B cell (primary cell): ENCODE measurements at regions of chr14 and their contacts with region 1.

Region 1: GRCh38 chr14:67695394-67695949 is at the start of gene RDH11:
- DNase-seq: peak; percentile 87
- ATAC-seq: peak; percentile 98
- H3K4me3 ChIP-seq: peak within 1 kb of the TSS; percentile 77 to 97 (median 94)
- H3K4me3 Mint-ChIP-seq: peak within 1 kb of the TSS; percentile 96
- H3K27ac ChIP-seq: peak within 1 kb of the TSS; percentile 62 to 88
- H3K27ac Mint-ChIP-seq: peak within 1 kb of the TSS; percentile 89
- H3K4me1 ChIP-seq: peaks cover 6 to 13% of the 10 kb centered on the region in 2 donors
- H3K4me1 Mint-ChIP-seq: peaks cover 14% of the 10 kb centered on the region
- H3K27me3 ChIP-seq: no peaks in the 10 kb centered on the region
- H3K27me3 Mint-ChIP-seq: no peaks in the 10 kb centered on the region
- CTCF ChIP-seq: no peak
- total RNA-seq, gene RDH11: 32.8 and 35.4 TPM in 2 replicates

Region 2: GRCh38 chr14:66507722-66508546 is 1187.5 kb before region 1 on chr14 and contains the start of gene GPHN:
- CTCF ChIA-PET with region 1: no interaction called
- POLR2A ChIA-PET with region 1: no interaction called
- intact Hi-C with region 1: loop called (anchors 5 kb)
- DNase-seq: peak; percentile 90
- ATAC-seq: peak; percentile 90
- H3K4me3 ChIP-seq: peak within 1 kb of the TSS; percentile 74 to 90 (median 81)
- H3K4me3 Mint-ChIP-seq: peak within 1 kb of the TSS; percentile 99
- H3K27ac ChIP-seq: peak within 1 kb of the TSS; percentile 36 to 66
- H3K27ac Mint-ChIP-seq: peak within 1 kb of the TSS; percentile 91
- H3K4me1 ChIP-seq: peaks cover 7 to 18% of the 10 kb centered on the region in 2 donors
- H3K4me1 Mint-ChIP-seq: peaks cover 25% of the 10 kb centered on the region
- H3K27me3 ChIP-seq: peaks cover 0 to 8% (median 0%) of the 10 kb centered on the region in 4 experiments
- H3K27me3 Mint-ChIP-seq: peaks cover 6% of the 10 kb centered on the region
- CTCF ChIP-seq: peak; percentile 24
- total RNA-seq, gene GPHN: 15.5 and 18.0 TPM in 2 replicates

Region 3: GRCh38 chr14:67487937-67488893 is 207.3 kb before region 1 on chr14 and contains the start of gene TMEM229B:
- CTCF ChIA-PET with region 1: no interaction called
- POLR2A ChIA-PET with region 1: no interaction called
- intact Hi-C with region 1: loop called (anchors 1 kb)
- DNase-seq: peak; percentile 94
- ATAC-seq: peak; percentile 83
- H3K4me3 ChIP-seq: peak within 1 kb of the TSS; percentile 24 to 66 (median 55)
- H3K4me3 Mint-ChIP-seq: peak within 1 kb of the TSS; percentile 84
- H3K27ac ChIP-seq: peak within 1 kb of the TSS; percentile 97 to 98
- H3K27ac Mint-ChIP-seq: peak within 1 kb of the TSS; percentile 96
- H3K4me1 ChIP-seq: peaks cover 70 to 77% of the 10 kb centered on the region in 2 donors
- H3K4me1 Mint-ChIP-seq: peaks cover 83% of the 10 kb centered on the region
- H3K27me3 ChIP-seq: no peaks in the 10 kb centered on the region
- H3K27me3 Mint-ChIP-seq: no peaks in the 10 kb centered on the region
- CTCF ChIP-seq: peak; percentile 25
- total RNA-seq, gene TMEM229B: 4.2 and 6.9 TPM in 2 replicates

Region 4: GRCh38 chr14:67619446-67620216 is 75.8 kb before region 1 on chr14 and contains the start of gene ARG2:
- CTCF ChIA-PET with region 1: interaction called, 5 read pairs
- POLR2A ChIA-PET with region 1: no interaction called
- intact Hi-C with region 1: loop called (anchors 1 kb)
- DNase-seq: peak; percentile 98
- ATAC-seq: peak; percentile 94
- H3K4me3 ChIP-seq: peak within 1 kb of the TSS; percentile 57 to 94 (median 81)
- H3K4me3 Mint-ChIP-seq: peak within 1 kb of the TSS; percentile 92
- H3K27ac ChIP-seq: peak within 1 kb of the TSS; percentile 76 to 78
- H3K27ac Mint-ChIP-seq: peak within 1 kb of the TSS; percentile 94
- H3K4me1 ChIP-seq: peaks cover 12 to 18% of the 10 kb centered on the region in 2 donors
- H3K4me1 Mint-ChIP-seq: peaks cover 23% of the 10 kb centered on the region
- H3K27me3 ChIP-seq: peaks cover 0 to 4% (median 0%) of the 10 kb centered on the region in 4 experiments
- H3K27me3 Mint-ChIP-seq: no peaks in the 10 kb centered on the region
- CTCF ChIP-seq: no peak
- total RNA-seq, gene ARG2: 1.8 and 2.0 TPM in 2 replicates

Region 5: DNA sequence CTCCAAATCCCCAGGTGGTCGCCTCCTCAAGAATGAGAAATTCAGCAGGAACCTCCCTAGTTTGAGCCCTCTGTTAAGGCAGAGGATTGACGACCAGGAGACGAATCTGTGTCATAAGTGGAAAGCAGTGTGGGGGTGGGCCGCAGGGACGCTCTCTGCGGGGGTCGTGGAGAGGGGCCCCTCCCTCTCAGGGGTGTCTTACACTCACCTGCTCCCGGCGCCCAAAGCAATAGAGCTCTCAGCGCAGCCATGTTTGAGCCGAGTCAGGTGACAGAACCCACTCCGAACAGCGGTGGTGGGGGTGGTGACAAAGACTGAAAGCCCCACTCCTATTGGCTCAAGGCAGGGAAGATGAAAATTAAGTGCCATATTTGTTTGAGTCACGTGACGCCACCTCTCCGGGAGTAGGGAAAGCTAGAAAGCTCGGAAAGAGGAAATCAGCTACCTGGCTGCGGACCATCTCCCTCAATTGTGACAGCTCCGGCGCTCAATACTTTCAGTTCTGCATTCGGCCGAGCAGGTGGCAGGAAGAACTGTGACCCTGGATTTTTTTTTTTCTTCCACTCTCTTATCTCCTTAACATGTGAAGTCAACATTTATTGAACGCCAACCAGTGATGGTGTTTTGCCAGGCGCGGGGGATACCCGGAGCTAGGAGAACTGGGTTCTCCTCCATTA is 121.0 kb after region 1 on chr14 and contains the start of gene ZFYVE26:
- CTCF ChIA-PET with region 1: no interaction called
- POLR2A ChIA-PET with region 1: no interaction called
- intact Hi-C with region 1: loop called (anchors 1 kb)
- DNase-seq: peak; percentile 97
- ATAC-seq: peak; percentile 84
- H3K4me3 ChIP-seq: peak within 1 kb of the TSS; percentile 56 to 89 (median 77)
- H3K4me3 Mint-ChIP-seq: peak within 1 kb of the TSS; percentile 95
- H3K27ac ChIP-seq: peak within 1 kb of the TSS; percentile 79 to 84
- H3K27ac Mint-ChIP-seq: peak within 1 kb of the TSS; percentile 96
- H3K4me1 ChIP-seq: peaks cover 31 to 34% of the 10 kb centered on the region in 2 donors
- H3K4me1 Mint-ChIP-seq: peaks cover 55% of the 10 kb centered on the region
- H3K27me3 ChIP-seq: no peaks in the 10 kb centered on the region
- H3K27me3 Mint-ChIP-seq: no peaks in the 10 kb centered on the region
- CTCF ChIP-seq: no peak
- total RNA-seq, gene ZFYVE26: 46.3 and 53.9 TPM in 2 replicates

Region 6: GRCh38 chr14:69611201-69612011 is 1915.9 kb after region 1 on chr14 and contains the start of gene SUSD6:
- CTCF ChIA-PET with region 1: no interaction called
- POLR2A ChIA-PET with region 1: no interaction called
- intact Hi-C with region 1: loop called (anchors 5 kb)
- DNase-seq: peak; percentile 93
- ATAC-seq: peak; percentile 65
- H3K4me3 ChIP-seq: peak within 1 kb of the TSS; percentile 67 to 92 (median 76)
- H3K4me3 Mint-ChIP-seq: peak within 1 kb of the TSS; percentile 98
- H3K27ac ChIP-seq: peak within 1 kb of the TSS; percentile 80 to 92
- H3K27ac Mint-ChIP-seq: peak within 1 kb of the TSS; percentile 98
- H3K4me1 ChIP-seq: peaks cover 51 to 55% of the 10 kb centered on the region in 2 donors
- H3K4me1 Mint-ChIP-seq: peaks cover 54% of the 10 kb centered on the region
- H3K27me3 ChIP-seq: no peaks in the 10 kb centered on the region
- H3K27me3 Mint-ChIP-seq: no peaks in the 10 kb centered on the region
- CTCF ChIP-seq: no peak
- total RNA-seq, gene SUSD6: 97.8 and 115 TPM in 2 replicates